CD8-positive, alpha-beta memory T cell (primary cell): ENCODE measurements at regions of chr12 and their contacts with region 1.

Region 1: GRCh38 chr12:47742253-47742825 is 16.3 kb downstream of the RAPGEF3 start:
- DNase-seq: peak; percentile 49 to 82 (median 61)
- H3K4me3 ChIP-seq: no peak overlapping the region
- H3K4me3 Mint-ChIP-seq: peak overlapping the region in 2 of 7 donors; percentile 3 to 13
- H3K27ac ChIP-seq: no peak overlapping the region
- H3K27ac Mint-ChIP-seq: peak overlapping the region in 1 of 8 donors; percentile 29
- H3K4me1 ChIP-seq: peaks cover 21% of the 10 kb centered on the region
- H3K4me1 Mint-ChIP-seq: peaks cover 19 to 37% (median 25%) of the 10 kb centered on the region in 3 donors
- H3K27me3 ChIP-seq: no peaks in the 10 kb centered on the region
- H3K27me3 Mint-ChIP-seq: peaks cover 5 to 23% of the 10 kb centered on the region in 2 donors

Region 2: DNA sequence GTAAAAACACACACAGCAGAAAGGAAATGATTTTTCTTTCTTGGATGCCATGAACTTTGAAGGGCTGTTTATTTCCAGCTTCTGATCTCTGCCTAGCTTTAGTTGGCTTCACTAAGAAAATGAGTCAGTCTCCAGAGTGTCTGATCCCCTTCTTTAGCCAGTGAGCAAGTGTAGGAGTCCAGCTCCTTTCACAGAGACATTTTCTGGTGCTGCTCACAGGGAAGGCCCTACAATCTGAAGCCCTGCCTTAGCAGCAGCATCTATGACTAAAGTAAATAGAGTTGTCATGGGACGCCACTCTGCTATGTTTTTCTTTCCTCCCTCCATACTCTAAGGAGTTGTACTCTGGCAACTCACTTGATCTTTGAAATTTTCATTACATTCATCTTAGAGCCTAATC is 140.0 kb before region 1 on chr12:
- CTCF ChIA-PET with region 1: no interaction called
- POLR2A ChIA-PET with region 1: no interaction called
- DNase-seq: no peak
- H3K4me3 ChIP-seq: no peak overlapping the region
- H3K4me3 Mint-ChIP-seq: no peak overlapping the region
- H3K27ac ChIP-seq: no peak overlapping the region
- H3K27ac Mint-ChIP-seq: no peak overlapping the region
- H3K4me1 ChIP-seq: no peaks in the 10 kb centered on the region
- H3K4me1 Mint-ChIP-seq: peaks cover 0 to 3% (median 0%) of the 10 kb centered on the region in 3 donors
- H3K27me3 ChIP-seq: no peaks in the 10 kb centered on the region
- H3K27me3 Mint-ChIP-seq: peaks cover 0 to 2% of the 10 kb centered on the region in 2 donors

Region 3: GRCh38 chr12:47705566-47706425 is 36.5 kb before region 1 on chr12 and contains the start of gene RPAP3:
- CTCF ChIA-PET with region 1: interaction called, 34 read pairs
- POLR2A ChIA-PET with region 1: no interaction called
- DNase-seq: peak; percentile 91 to 97 (median 95)
- H3K4me3 ChIP-seq: peak within 1 kb of the TSS; percentile 83
- H3K4me3 Mint-ChIP-seq: peak within 1 kb of the TSS; percentile 90 to 99 (median 98)
- H3K27ac ChIP-seq: peak within 1 kb of the TSS; percentile 79
- H3K27ac Mint-ChIP-seq: peak within 1 kb of the TSS; percentile 90 to 100 (median 94)
- H3K4me1 ChIP-seq: peaks cover 40% of the 10 kb centered on the region
- H3K4me1 Mint-ChIP-seq: peaks cover 39 to 73% (median 61%) of the 10 kb centered on the region in 3 donors
- H3K27me3 ChIP-seq: no peaks in the 10 kb centered on the region
- H3K27me3 Mint-ChIP-seq: no peaks in the 10 kb centered on the region
- total RNA-seq, gene RPAP3: 54.0 to 58.1 TPM

Region 4: GRCh38 chr12:47725893-47726292 is 16.4 kb before region 1 on chr12:
- CTCF ChIA-PET with region 1: interaction called, 130 read pairs
- POLR2A ChIA-PET with region 1: no interaction called
- DNase-seq: no peak
- H3K4me3 ChIP-seq: no peak overlapping the region
- H3K4me3 Mint-ChIP-seq: no peak overlapping the region
- H3K27ac ChIP-seq: no peak overlapping the region
- H3K27ac Mint-ChIP-seq: no peak overlapping the region
- H3K4me1 ChIP-seq: peaks cover 19% of the 10 kb centered on the region
- H3K4me1 Mint-ChIP-seq: peaks cover 23 to 28% (median 23%) of the 10 kb centered on the region in 3 donors
- H3K27me3 ChIP-seq: no peaks in the 10 kb centered on the region
- H3K27me3 Mint-ChIP-seq: peaks cover 0 to 5% of the 10 kb centered on the region in 2 donors

Region 5: GRCh38 chr12:47779301-47779942 is 37.1 kb after region 1 on chr12:
- CTCF ChIA-PET with region 1: interaction called, 414 read pairs
- POLR2A ChIA-PET with region 1: no interaction called
- DNase-seq: peak; percentile 77 to 92 (median 85)
- H3K4me3 ChIP-seq: no peak overlapping the region
- H3K4me3 Mint-ChIP-seq: peak overlapping the region in 1 of 7 donors; percentile 75
- H3K27ac ChIP-seq: no peak overlapping the region
- H3K27ac Mint-ChIP-seq: peak overlapping the region in 5 of 8 donors; percentile 8 to 66 (median 39)
- H3K4me1 ChIP-seq: peaks cover 8% of the 10 kb centered on the region
- H3K4me1 Mint-ChIP-seq: peaks cover 7 to 15% (median 9%) of the 10 kb centered on the region in 3 donors
- H3K27me3 ChIP-seq: no peaks in the 10 kb centered on the region
- H3K27me3 Mint-ChIP-seq: no peaks in the 10 kb centered on the region

Region 6: DNA sequence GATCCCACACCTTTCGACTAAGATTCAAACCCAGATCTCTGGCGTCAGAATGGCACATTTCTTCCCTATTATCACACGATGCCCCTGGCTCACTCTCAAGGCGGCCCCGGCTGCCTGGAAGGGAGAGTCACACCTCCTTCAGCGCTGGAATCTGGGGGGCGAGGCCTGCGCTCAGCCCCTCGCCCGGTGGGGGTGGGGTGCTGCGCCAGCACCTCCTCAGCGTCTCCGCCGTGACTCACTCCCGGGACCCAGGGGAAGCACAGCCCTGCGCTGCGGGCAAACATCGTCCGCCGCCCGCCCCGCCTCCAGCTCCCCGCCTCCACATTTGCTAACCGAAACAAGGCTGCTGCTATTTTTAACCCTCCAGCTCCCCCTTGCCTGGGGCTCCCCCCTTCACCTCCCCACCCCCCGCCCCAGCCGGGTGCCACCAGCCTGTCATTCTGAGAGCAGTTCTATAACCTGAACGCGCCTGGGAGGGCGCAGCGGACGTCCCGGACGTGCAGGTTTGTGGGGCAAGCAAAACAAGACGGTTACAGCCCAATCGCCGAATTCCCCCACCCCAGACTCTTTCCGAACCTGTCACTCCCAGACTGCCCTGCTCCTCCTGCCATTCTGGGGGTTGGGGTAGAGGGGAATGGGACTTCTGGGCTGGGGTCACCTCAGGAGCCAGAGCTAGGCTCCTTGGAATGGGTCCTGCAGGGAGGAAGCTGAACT is 70.6 kb after region 1 on chr12:
- CTCF ChIA-PET with region 1: interaction called, 23 read pairs
- POLR2A ChIA-PET with region 1: no interaction called
- DNase-seq: peak; percentile 79 to 93 (median 82)
- H3K4me3 ChIP-seq: peak overlapping the region; percentile 72
- H3K4me3 Mint-ChIP-seq: peak overlapping the region; percentile 84 to 94 (median 90)
- H3K27ac ChIP-seq: peak overlapping the region; percentile 86
- H3K27ac Mint-ChIP-seq: peak overlapping the region; percentile 93 to 99 (median 98)
- H3K4me1 ChIP-seq: peaks cover 94% of the 10 kb centered on the region
- H3K4me1 Mint-ChIP-seq: peaks cover 85 to 99% (median 98%) of the 10 kb centered on the region in 3 donors
- H3K27me3 ChIP-seq: no peaks in the 10 kb centered on the region
- H3K27me3 Mint-ChIP-seq: peaks cover 0 to 4% of the 10 kb centered on the region in 2 donors

Region 7: DNA sequence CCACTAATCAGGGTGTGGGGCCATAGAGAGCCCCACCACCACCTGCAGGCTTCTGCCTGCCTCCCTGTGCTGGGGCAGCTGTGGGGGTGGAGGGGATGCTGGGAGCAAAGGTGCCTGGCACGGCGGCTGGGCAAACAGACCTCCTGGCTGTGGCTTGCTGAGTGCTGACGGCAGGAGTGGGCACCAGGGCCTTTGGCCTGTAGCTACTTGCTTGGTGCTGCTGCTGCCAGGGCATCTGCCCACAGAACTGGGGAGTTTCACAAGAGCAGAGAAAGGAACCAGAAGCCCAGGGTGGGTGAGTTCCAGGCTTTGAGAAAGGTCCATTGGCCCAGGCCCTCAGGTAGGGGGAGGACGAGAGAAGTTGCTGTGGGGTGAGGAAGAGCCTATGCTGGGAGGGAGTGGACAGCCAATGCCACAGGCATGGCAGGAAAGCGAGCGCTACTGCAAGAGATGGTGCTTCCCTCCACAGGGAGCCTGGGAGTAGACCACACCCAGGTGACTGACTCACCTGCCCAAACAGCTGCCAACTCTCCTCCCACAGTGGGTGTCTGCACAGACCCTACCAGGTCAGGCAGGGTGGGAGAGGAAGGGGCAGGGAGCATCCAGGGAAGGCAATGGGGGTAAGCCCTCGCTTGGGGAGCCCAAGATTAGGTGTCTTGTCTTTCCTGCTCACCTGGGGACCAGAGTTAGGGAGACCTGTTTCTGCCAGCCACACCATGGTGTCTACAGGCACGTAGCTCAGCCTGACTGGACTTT is 116.3 kb after region 1 on chr12:
- CTCF ChIA-PET with region 1: no interaction called
- POLR2A ChIA-PET with region 1: no interaction called
- DNase-seq: no peak
- H3K4me3 ChIP-seq: no peak overlapping the region
- H3K4me3 Mint-ChIP-seq: no peak overlapping the region
- H3K27ac ChIP-seq: no peak overlapping the region
- H3K27ac Mint-ChIP-seq: peak overlapping the region in 1 of 8 donors; percentile 17
- H3K4me1 ChIP-seq: no peaks in the 10 kb centered on the region
- H3K4me1 Mint-ChIP-seq: peaks cover 0 to 2% (median 0%) of the 10 kb centered on the region in 3 donors
- H3K27me3 ChIP-seq: no peaks in the 10 kb centered on the region
- H3K27me3 Mint-ChIP-seq: no peaks in the 10 kb centered on the region